A549 (cell line): ENCODE measurements at regions of chr2 and their contacts with region 1.

Region 1: GRCh38 chr2:172465417-172466334 is 38.3 kb downstream of the ITGA6 start:
- DNase-seq: peak; percentile 40 to 87
- ATAC-seq: peak; percentile 86 to 87
- H3K4me3 ChIP-seq: peak overlapping the region; percentile 20
- H3K27ac ChIP-seq: peak overlapping the region; percentile 24 to 69; a peak in 5 of 6 replicates
- H3K4me1 ChIP-seq: peaks cover 8% of the 10 kb centered on the region; the same call in 2 of the 3 replicates
- CTCF ChIP-seq: peak; percentile 93
- EP300 ChIP-seq: no peak
- POLR2A ChIP-seq: no peak
- RAD21 ChIP-seq: peak; percentile 93 to 95

Region 2: DNA sequence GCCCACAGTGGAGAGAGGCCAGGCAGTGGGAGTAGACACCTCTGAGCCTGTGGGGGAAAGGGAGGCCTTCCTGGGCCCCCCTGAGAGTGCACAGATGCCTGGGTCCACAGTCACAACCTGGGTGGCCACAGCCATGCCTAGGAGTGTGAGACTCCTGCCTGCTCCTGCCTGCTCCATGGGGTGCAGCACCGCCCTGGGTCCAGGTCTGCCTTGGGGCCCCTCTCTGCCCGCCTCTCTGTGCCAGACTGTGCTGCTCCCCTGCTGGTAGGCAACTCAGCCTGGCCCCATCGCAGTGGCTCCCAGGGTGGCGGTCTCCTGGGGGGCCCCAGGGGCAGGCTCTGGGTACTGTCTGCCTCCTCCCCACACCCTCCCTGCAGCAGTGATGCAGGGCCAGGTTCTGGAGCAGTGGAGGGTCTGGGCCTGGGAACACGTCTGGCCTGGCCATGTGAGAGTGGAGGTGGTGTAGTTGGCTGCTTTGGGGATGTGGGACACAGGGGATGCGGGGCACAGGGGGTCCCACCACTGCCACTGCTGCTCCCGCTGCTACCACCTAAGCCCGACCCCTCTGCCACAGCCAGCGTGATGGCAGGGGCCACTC is 302.8 kb before region 1 on chr2:
- CTCF ChIA-PET with region 1: interaction called, 403 read pairs
- POLR2A ChIA-PET with region 1: no interaction called
- DNase-seq: no peak
- ATAC-seq: no peak; a peak in 1 of 6 replicates
- H3K4me3 ChIP-seq: no peak overlapping the region
- H3K27ac ChIP-seq: no peak overlapping the region
- H3K4me1 ChIP-seq: no peaks in the 10 kb centered on the region
- CTCF ChIP-seq: no peak
- EP300 ChIP-seq: no peak
- POLR2A ChIP-seq: no peak
- RAD21 ChIP-seq: no peak

Region 3: DNA sequence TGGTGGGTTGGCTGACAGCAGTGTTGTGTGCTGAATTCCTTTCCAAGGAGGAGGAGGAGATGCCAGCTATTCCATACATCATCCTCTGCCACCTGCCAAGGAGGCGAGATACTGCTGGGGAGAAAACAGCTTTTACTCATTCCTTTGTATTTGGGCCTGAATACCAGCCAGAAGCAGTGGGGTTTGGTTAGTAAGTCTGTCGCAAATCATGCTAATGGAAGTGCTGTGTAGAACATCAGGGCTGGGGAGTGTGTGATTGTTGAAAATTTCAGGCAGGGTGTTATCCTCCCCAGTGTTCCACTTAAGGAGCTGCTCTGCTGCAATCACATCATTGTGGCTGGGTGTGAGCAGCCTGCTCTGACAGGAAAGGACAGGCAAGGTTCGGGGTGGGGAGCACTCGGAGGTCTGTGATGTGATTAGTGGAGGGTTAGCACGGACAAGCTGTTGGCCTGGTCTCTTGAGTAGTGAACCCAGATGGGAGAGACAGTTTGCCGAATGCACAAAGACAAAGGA is 234.7 kb before region 1 on chr2:
- CTCF ChIA-PET with region 1: interaction called, 14 read pairs
- POLR2A ChIA-PET with region 1: no interaction called
- DNase-seq: no peak
- ATAC-seq: no peak
- H3K4me3 ChIP-seq: no peak overlapping the region
- H3K27ac ChIP-seq: peak overlapping the region in 1 of 2 experiments; percentile 73; a peak in 3 of 6 replicates
- H3K4me1 ChIP-seq: peaks cover 18% of the 10 kb centered on the region
- CTCF ChIP-seq: no peak
- EP300 ChIP-seq: no peak
- POLR2A ChIP-seq: no peak
- RAD21 ChIP-seq: no peak

Region 4: GRCh38 chr2:172279813-172280212 is 185.9 kb before region 1 on chr2:
- CTCF ChIA-PET with region 1: interaction called, 16 read pairs
- POLR2A ChIA-PET with region 1: no interaction called
- DNase-seq: no peak
- ATAC-seq: no peak
- H3K4me3 ChIP-seq: no peak overlapping the region
- H3K27ac ChIP-seq: no peak overlapping the region
- H3K4me1 ChIP-seq: no peaks in the 10 kb centered on the region
- CTCF ChIP-seq: no peak
- EP300 ChIP-seq: no peak
- POLR2A ChIP-seq: no peak
- RAD21 ChIP-seq: peak in 1 of 2 experiments; percentile 18; a peak in 1 of 5 replicates

Region 5: GRCh38 chr2:172427256-172427989 is 38.3 kb before region 1 on chr2 and contains the start of gene ITGA6:
- CTCF ChIA-PET with region 1: interaction called, 654 read pairs
- POLR2A ChIA-PET with region 1: interaction called, 24 read pairs
- DNase-seq: peak; percentile 70 to 84
- ATAC-seq: peak; percentile 85 to 90
- H3K4me3 ChIP-seq: peak within 1 kb of the TSS; percentile 82
- H3K27ac ChIP-seq: peak within 1 kb of the TSS; percentile 80 to 95
- H3K4me1 ChIP-seq: peaks cover 28% of the 10 kb centered on the region
- CTCF ChIP-seq: no peak
- EP300 ChIP-seq: no peak
- POLR2A ChIP-seq: peak; percentile 89
- RAD21 ChIP-seq: peak in 1 of 2 experiments; percentile 42; a peak in 3 of 5 replicates
- polyA plus RNA-seq, gene ITGA6: 27.7 and 41.0 TPM in 2 replicates

Region 6: DNA sequence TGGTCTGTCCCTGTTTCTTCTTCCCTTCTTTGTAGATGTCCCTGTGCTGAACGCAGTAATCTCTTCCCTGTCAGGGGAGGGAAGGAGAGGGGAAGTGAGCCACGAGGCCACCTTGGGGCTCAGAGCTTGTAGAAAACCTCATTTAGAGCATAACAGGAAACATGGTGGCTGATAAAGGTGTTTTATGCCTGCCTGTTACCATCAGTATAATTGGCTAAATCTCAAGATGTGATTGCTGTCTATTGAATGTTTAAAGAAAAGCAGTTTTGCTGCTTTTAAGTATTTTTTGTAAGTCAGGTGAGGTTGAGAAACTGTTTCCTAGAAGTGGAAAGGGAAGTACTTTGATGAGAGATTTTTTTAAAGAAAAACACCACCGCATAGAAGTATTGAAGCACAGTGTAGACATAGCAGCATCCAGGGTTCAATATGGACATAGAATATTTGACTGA is 30.5 kb after region 1 on chr2:
- CTCF ChIA-PET with region 1: interaction called, 13 read pairs
- POLR2A ChIA-PET with region 1: no interaction called
- DNase-seq: no peak
- ATAC-seq: no peak
- H3K4me3 ChIP-seq: no peak overlapping the region
- H3K27ac ChIP-seq: no peak overlapping the region
- H3K4me1 ChIP-seq: no peaks in the 10 kb centered on the region
- CTCF ChIP-seq: no peak
- EP300 ChIP-seq: no peak
- POLR2A ChIP-seq: no peak
- RAD21 ChIP-seq: no peak